Activated B cell treated with CpG ODN at 0.5 μM for 24 hours (primary cell): ENCODE measurements at regions of chr1 and their contacts with region 1.

Region 1: GRCh38 chr1:28860332-28861073 is 48.5 kb downstream of the OPRD1 start:
- DNase-seq: no peak
- ATAC-seq: no peak
- H3K4me3 Mint-ChIP-seq: no peak overlapping the region
- H3K27ac Mint-ChIP-seq: no peak overlapping the region
- H3K4me1 Mint-ChIP-seq: no peaks in the 10 kb centered on the region
- H3K27me3 Mint-ChIP-seq: peaks cover 6% of the 10 kb centered on the region
- CTCF ChIP-seq: no peak

Region 2: DNA sequence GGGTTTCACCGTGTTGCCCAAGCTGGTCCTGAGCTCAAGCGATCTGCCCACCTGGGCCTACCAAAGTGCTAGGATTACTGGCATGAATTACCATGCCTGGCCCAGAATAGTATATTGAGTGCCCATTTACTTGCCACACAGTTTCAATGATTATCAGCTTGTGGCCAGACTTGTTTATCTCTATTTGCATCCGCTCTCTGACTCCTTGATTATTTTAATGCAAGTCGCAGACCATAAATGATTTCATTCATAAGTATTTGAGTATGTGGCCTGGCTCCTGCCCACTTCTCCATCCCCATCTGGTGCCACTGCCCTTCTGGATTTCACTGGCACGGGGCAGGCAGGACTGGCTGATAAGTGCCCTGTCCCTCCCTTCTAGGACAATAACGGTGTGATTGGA is 325.8 kb before region 1 on chr1:
- CTCF ChIA-PET with region 1: no interaction called
- POLR2A ChIA-PET with region 1: interaction called, 11 read pairs
- intact Hi-C with region 1: no loop called
- DNase-seq: no peak
- ATAC-seq: no peak
- H3K4me3 Mint-ChIP-seq: no peak overlapping the region
- H3K27ac Mint-ChIP-seq: no peak overlapping the region
- H3K4me1 Mint-ChIP-seq: no peaks in the 10 kb centered on the region
- H3K27me3 Mint-ChIP-seq: no peaks in the 10 kb centered on the region
- CTCF ChIP-seq: no peak

Region 3: GRCh38 chr1:28811766-28812668 is 48.5 kb before region 1 on chr1 and contains the start of gene OPRD1:
- CTCF ChIA-PET with region 1: no interaction called
- POLR2A ChIA-PET with region 1: no interaction called
- intact Hi-C with region 1: no loop called
- DNase-seq: no peak
- ATAC-seq: no peak
- H3K4me3 Mint-ChIP-seq: no peak within 1 kb of the TSS
- H3K27ac Mint-ChIP-seq: no peak within 1 kb of the TSS
- H3K4me1 Mint-ChIP-seq: peaks cover 4% of the 10 kb centered on the region
- H3K27me3 Mint-ChIP-seq: peaks cover 53% of the 10 kb centered on the region
- CTCF ChIP-seq: no peak
- total RNA-seq, gene OPRD1: not detected in 2 replicates